Activated naive CD4-positive, alpha-beta T cell treated with anti-CD3 and anti-CD28 coated beads, Interleukin-2, amount 10 ng/mL, durations not matched to agents 7 days and 5 days (primary cell): ENCODE measurements at regions of chr2 and their contacts with region 1.

Region 1: DNA sequence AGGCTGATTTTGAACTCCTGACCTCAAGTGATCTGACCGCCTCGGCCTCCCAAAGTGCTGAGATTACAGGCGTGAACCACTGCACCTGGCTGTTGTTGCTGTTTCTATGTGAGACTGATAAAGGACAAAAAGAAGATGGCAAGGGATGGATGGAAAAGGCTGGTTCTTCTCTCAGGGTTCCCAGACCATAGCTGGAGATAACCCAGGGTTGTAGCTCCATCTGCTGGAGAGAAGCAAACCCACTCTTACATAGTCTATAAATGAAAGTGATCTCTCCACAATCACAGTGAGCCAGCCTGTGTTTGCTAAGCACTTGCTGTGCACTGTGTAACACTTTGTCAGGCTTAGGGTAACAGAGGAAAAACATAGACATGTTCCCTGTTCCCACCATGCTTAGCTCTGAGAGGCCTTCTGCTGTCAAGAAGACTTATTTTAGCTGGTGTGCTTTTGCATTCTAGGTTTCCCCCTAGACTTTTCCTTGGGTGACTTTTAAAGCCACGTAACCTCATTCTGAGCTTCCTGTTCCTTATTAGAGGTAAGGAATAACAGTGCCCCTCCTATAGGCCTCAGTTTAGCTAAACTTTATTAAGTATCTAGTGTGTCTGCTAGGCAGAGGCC is 49.7 kb downstream of the LIMS1 start:
- DNase-seq: peak; percentile 73
- H3K4me3 Mint-ChIP-seq: no peak overlapping the region
- H3K27ac Mint-ChIP-seq: no peak overlapping the region
- H3K4me1 Mint-ChIP-seq: peaks cover 16% of the 10 kb centered on the region
- H3K27me3 Mint-ChIP-seq: no peaks in the 10 kb centered on the region

Region 2: DNA sequence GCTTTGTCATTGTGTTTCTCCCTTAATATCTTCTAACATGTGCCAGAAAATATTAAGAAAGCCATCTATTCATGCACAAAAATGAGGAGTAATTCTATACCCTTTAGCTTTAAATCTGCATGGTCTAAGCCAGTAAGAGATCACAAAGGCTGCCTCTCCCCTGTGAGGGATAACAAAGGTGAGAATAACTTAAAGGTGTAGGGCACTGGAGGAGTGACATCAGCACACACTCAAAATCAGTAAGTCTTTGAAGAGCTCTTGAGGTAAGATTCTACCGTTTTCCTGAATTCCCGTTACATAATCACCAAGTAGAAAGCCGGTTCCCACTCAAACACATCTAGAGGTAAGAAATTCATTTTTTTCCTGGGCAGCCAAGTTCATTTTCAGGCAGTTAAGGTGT is 468.1 kb before region 1 on chr2:
- CTCF ChIA-PET with region 1: no interaction called
- DNase-seq: no peak
- H3K4me3 Mint-ChIP-seq: no peak overlapping the region
- H3K27ac Mint-ChIP-seq: no peak overlapping the region
- H3K4me1 Mint-ChIP-seq: no peaks in the 10 kb centered on the region
- H3K27me3 Mint-ChIP-seq: no peaks in the 10 kb centered on the region

Region 3: GRCh38 chr2:108555572-108555971 is 28.4 kb before region 1 on chr2:
- CTCF ChIA-PET with region 1: no interaction called
- DNase-seq: no peak
- H3K4me3 Mint-ChIP-seq: no peak overlapping the region
- H3K27ac Mint-ChIP-seq: no peak overlapping the region
- H3K4me1 Mint-ChIP-seq: no peaks in the 10 kb centered on the region
- H3K27me3 Mint-ChIP-seq: no peaks in the 10 kb centered on the region

Region 4: GRCh38 chr2:108594132-108594981 is 10.3 kb after region 1 on chr2:
- CTCF ChIA-PET with region 1: interaction called, 15 read pairs
- DNase-seq: no peak
- H3K4me3 Mint-ChIP-seq: no peak overlapping the region
- H3K27ac Mint-ChIP-seq: no peak overlapping the region
- H3K4me1 Mint-ChIP-seq: peaks cover 27% of the 10 kb centered on the region
- H3K27me3 Mint-ChIP-seq: no peaks in the 10 kb centered on the region

Region 5: GRCh38 chr2:108643261-108643849 is 59.3 kb after region 1 on chr2:
- CTCF ChIA-PET with region 1: no interaction called
- DNase-seq: no peak
- H3K4me3 Mint-ChIP-seq: no peak overlapping the region
- H3K27ac Mint-ChIP-seq: no peak overlapping the region
- H3K4me1 Mint-ChIP-seq: peaks cover 23% of the 10 kb centered on the region
- H3K27me3 Mint-ChIP-seq: no peaks in the 10 kb centered on the region

Region 6: DNA sequence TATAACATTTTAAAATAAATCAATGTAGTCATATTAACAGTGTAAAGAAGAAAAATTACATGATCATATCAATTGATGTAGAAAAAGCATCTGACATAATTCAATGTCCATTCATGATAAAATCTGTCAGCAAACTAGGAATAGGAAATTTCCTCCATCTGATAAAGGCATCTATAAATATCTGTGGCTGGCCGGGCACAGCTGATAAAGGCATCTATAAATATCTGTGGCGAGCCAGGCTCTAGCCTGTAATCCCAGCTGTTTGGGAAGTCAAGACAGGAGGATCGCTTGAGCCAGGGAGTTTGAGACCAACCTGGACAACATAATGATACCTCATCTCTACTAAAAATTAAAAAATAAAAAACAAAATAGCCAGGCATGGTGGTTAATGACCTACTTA is 117.2 kb after region 1 on chr2:
- CTCF ChIA-PET with region 1: no interaction called
- DNase-seq: no peak
- H3K4me3 Mint-ChIP-seq: no peak overlapping the region
- H3K27ac Mint-ChIP-seq: no peak overlapping the region
- H3K4me1 Mint-ChIP-seq: peaks cover 2% of the 10 kb centered on the region
- H3K27me3 Mint-ChIP-seq: peaks cover 6% of the 10 kb centered on the region